ENCODE measurements at regions of chr15 and their contacts with region 1.

Region 1: DNA sequence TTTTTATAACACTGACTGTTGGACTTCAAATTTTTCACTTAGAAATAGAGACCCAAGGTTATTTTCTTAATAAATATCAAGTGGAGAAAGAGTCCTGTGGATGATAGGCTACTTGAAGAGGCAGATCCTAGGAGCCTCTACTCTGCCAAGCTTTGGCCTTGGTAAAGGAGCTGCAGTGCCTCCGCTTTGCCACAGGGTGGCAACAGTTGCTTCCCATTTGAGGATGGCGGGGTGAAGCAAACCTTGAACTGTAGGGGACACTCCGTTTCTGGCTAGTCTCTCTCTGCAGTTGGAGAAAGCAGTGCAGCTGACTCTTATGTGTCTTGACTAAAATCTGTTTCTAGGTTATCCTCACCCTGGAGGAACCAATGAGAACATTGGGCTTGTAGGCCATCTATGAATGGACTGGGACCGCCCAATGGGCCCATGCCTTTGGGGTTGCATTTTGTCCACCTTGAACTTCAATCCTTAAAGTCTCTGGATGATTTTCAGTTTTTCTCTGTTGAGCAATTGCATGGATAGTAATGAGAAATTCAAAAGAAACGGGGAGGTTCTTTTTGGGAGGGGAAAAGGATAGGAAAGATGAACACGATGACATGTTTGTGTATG is 9.8 kb downstream of the SCG5 start:
- ATAC-seq: peak in 4 of 8 experiments; percentile 70 to 88 (median 82)
- H3K4me3 ChIP-seq: no peak overlapping the region
- H3K27ac ChIP-seq: no peak overlapping the region
- H3K4me1 ChIP-seq: no peaks in the 10 kb centered on the region

Region 2: GRCh38 chr15:32717426-32718226 is 66.3 kb after region 1 on chr15 and contains the start of gene GREM1:
- in situ Hi-C with region 1: no loop called
- ATAC-seq: peak; percentile 31 to 59 (median 46)
- H3K4me3 ChIP-seq: peak within 1 kb of the TSS; percentile 20 to 35 (median 30)
- H3K27ac ChIP-seq: no peak within 1 kb of the TSS
- H3K4me1 ChIP-seq: peaks cover 0 to 10% of the 10 kb centered on the region in 2 donors
- total RNA-seq, gene GREM1: under 0.01 to 12.0 (median 0.13) TPM

Region 3: DNA sequence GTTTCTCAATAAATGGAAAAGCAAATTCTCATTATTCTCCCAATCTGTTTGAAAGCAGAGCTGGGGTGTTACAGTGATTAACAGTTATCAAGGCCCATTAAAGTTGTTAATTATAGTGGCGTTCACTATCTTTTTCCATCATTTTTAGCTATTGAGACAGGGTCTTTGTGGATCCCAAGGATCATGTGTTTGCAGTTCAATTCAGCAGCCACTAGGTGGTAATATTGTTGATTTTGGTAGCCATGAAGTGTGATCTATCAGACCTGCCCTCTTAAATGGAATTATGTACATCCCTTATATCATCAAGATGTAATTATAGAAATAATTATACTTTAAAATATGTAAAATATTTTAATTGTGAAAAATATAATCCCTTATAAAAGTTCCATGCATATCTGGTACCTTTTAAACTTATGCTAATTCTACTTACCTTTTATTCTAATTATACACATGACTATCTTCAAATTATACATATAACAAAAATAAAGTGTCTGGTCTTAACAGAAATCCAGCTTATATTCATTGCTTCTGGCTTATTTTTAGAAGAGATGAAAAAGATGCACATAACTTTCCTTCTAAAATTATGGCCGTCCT is 192.9 kb after region 1 on chr15:
- in situ Hi-C with region 1: loop called in 1 of 9 experiments (anchors 25 kb)
- ATAC-seq: peak in 3 of 8 experiments; percentile 32 to 57 (median 51)
- H3K4me3 ChIP-seq: no peak overlapping the region
- H3K27ac ChIP-seq: no peak overlapping the region
- H3K4me1 ChIP-seq: peaks cover 0 to under 1% of the 10 kb centered on the region in 2 donors

Region 4: GRCh38 chr15:32956006-32956405 is 304.7 kb after region 1 on chr15:
- in situ Hi-C with region 1: loop called in 1 of 9 experiments (anchors 10 kb)
- ATAC-seq: peak in 3 of 8 experiments; percentile 17 to 58 (median 52)
- H3K4me3 ChIP-seq: no peak overlapping the region
- H3K27ac ChIP-seq: no peak overlapping the region
- H3K4me1 ChIP-seq: peaks cover 3 to 6% of the 10 kb centered on the region in 2 donors

Region 5: GRCh38 chr15:32994810-32995424 is 343.6 kb after region 1 on chr15:
- in situ Hi-C with region 1: loop called in 6 of 9 experiments (anchors 10 to 25 kb)
- ATAC-seq: peak in 4 of 8 experiments; percentile 39 to 47 (median 42)
- H3K4me3 ChIP-seq: no peak overlapping the region
- H3K27ac ChIP-seq: no peak overlapping the region
- H3K4me1 ChIP-seq: peaks cover 3 to 5% of the 10 kb centered on the region in 2 donors

Measured in motor neuron (in vitro differentiated cells).